ENCODE measurements at regions of chr4 and their contacts with region 1.

Region 1: DNA sequence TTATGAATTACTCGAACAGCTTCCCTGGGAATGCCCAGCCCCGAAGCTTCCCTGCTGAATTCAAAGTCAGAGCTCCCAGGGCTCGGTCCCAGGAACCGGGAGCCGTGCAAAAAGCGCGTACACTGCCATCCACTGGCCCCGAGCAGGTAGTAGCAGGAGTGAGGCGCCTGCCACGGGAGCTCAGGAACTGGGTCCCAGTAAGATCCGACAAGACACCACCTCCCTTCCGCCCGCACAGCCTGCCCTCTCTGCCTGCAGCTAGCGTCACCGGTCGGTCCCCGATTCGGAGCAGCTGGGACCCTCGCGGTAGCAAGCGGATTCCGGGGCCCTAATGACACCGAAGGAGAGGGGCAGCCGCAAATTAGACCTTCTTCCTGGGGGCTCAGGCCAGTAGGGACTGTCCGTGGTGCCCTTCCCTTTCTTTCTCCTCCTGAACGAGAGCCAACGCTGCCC is 1.2 kb downstream of the CORIN start:
- DNase-seq: peak; percentile 74
- ATAC-seq: peak; percentile 87
- H3K4me3 Mint-ChIP-seq: peak overlapping the region; percentile 74
- H3K27ac Mint-ChIP-seq: no peak overlapping the region
- H3K4me1 Mint-ChIP-seq: peaks cover 16% of the 10 kb centered on the region
- H3K27me3 Mint-ChIP-seq: peaks cover 23% of the 10 kb centered on the region

Region 2: DNA sequence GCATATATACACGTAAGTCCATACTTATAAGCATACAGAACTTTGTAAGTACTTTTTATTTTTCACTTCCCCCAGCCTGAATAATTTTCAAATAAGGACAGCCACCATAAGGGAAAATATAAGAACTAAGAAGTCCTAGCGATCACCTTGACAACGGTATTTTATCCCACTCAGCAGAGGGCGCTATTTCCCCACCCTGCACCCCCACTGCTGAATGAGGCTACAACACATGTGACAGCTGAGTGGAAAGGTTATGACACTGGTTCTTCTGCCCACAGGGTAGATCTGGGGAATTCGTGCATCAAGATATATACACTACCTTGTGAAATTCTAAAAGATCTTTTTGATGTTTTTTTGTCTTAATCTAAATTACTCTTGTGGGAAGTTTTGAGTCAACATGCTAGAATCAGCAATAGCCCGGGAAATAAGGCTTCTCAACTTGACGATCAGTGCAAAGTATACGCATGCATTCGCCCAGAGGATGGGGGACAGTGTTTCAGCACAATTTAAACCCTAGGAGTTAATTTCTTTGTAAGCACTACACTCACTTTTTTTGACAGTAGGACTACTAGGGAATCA is 150.3 kb before region 1 on chr4:
- CTCF ChIA-PET with region 1: interaction called, 11 read pairs
- DNase-seq: peak; percentile 71
- ATAC-seq: peak; percentile 66
- H3K4me3 Mint-ChIP-seq: no peak overlapping the region
- H3K27ac Mint-ChIP-seq: no peak overlapping the region
- H3K4me1 Mint-ChIP-seq: no peaks in the 10 kb centered on the region
- H3K27me3 Mint-ChIP-seq: peaks cover 21% of the 10 kb centered on the region

Region 3: GRCh38 chr4:47704693-47705325 is 131.9 kb before region 1 on chr4:
- CTCF ChIA-PET with region 1: interaction called, 12 read pairs
- DNase-seq: no peak
- ATAC-seq: peak; percentile 49
- H3K4me3 Mint-ChIP-seq: no peak overlapping the region
- H3K27ac Mint-ChIP-seq: no peak overlapping the region
- H3K4me1 Mint-ChIP-seq: no peaks in the 10 kb centered on the region
- H3K27me3 Mint-ChIP-seq: peaks cover 31% of the 10 kb centered on the region

Region 4: GRCh38 chr4:47763279-47763678 is 73.4 kb before region 1 on chr4:
- CTCF ChIA-PET with region 1: no interaction called
- DNase-seq: no peak
- ATAC-seq: no peak
- H3K4me3 Mint-ChIP-seq: no peak overlapping the region
- H3K27ac Mint-ChIP-seq: no peak overlapping the region
- H3K4me1 Mint-ChIP-seq: no peaks in the 10 kb centered on the region
- H3K27me3 Mint-ChIP-seq: peaks cover 13% of the 10 kb centered on the region

Region 5: DNA sequence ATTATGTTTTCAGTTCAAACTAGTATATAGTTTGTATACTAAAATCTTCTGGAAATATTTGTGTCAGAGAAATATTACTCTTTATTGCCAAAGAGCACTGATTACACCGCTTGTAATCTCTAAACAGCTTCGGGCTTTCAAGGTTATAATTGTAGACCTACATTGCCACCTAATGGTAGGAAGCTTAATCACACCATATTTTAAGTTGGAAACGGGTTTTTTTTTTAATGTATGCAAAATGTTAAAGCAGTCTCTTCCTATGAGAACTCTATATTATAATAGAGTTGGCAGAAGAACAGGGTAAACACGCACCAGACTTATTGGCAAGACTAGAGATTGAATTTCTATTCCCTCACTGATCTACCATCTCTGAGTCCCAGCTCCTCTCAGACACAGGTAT is 97.2 kb after region 1 on chr4:
- CTCF ChIA-PET with region 1: interaction called, 20 read pairs
- DNase-seq: no peak
- ATAC-seq: no peak
- H3K4me3 Mint-ChIP-seq: no peak overlapping the region
- H3K27ac Mint-ChIP-seq: no peak overlapping the region
- H3K4me1 Mint-ChIP-seq: no peaks in the 10 kb centered on the region
- H3K27me3 Mint-ChIP-seq: peaks cover 27% of the 10 kb centered on the region